H1 (cell line): ENCODE measurements at regions of chr13 and their contacts with region 1.

Region 1: DNA sequence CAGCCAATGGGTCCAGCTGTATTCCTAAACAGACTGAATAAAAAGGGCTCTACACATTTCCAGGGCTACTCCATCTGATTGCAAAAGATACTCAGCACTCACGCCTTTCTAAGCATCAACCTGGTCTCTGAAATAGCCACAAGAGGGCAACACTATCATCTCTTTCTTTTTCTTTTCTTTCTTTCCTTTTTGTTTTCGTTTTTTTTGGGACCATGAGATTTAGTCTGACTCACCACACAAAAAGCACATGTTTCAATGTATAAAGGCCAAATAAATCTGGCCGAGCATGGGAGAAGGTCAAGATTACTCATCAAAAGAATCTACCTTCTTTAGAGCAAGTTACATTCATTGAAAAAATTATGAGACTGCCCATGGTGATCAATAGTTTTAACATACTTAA is 805.6 kb upstream of the ARGLU1 start:
- DNase-seq: no peak
- H3K4me3 ChIP-seq: no peak overlapping the region
- H3K27ac ChIP-seq: no peak overlapping the region
- H3K4me1 ChIP-seq: peaks cover 0 to 1% (median 0%) of the 10 kb centered on the region in 4 experiments; a peak in 1 of 7 replicates
- H3K27me3 ChIP-seq: no peaks in the 10 kb centered on the region
- CTCF ChIP-seq: peak in 2 of 3 experiments; percentile 57 to 70; a peak in 3 of 4 replicates
- EP300 ChIP-seq: no peak
- POLR2A ChIP-seq: no peak
- RAD21 ChIP-seq: peak; percentile 70 to 78

Region 2: GRCh38 chr13:107387525-107387924 is 14.0 kb after region 1 on chr13:
- CTCF ChIA-PET with region 1: interaction called, 11 read pairs
- POLR2A ChIA-PET with region 1: interaction called, 4 read pairs
- DNase-seq: no peak
- H3K4me3 ChIP-seq: no peak overlapping the region
- H3K27ac ChIP-seq: no peak overlapping the region
- H3K4me1 ChIP-seq: peaks cover 0 to 7% (median 2%) of the 10 kb centered on the region in 4 experiments; a peak in 3 of 7 replicates
- H3K27me3 ChIP-seq: no peaks in the 10 kb centered on the region
- CTCF ChIP-seq: no peak
- EP300 ChIP-seq: no peak
- POLR2A ChIP-seq: no peak
- RAD21 ChIP-seq: no peak

Region 3: GRCh38 chr13:107650081-107650701 is 276.6 kb after region 1 on chr13:
- CTCF ChIA-PET with region 1: interaction called, 42 read pairs
- POLR2A ChIA-PET with region 1: no interaction called
- DNase-seq: peak; percentile 47 to 85
- H3K4me3 ChIP-seq: no peak overlapping the region
- H3K27ac ChIP-seq: no peak overlapping the region
- H3K4me1 ChIP-seq: no peaks in the 10 kb centered on the region
- H3K27me3 ChIP-seq: no peaks in the 10 kb centered on the region
- CTCF ChIP-seq: peak; percentile 88 to 100 (median 98)
- EP300 ChIP-seq: no peak
- POLR2A ChIP-seq: no peak
- RAD21 ChIP-seq: peak; percentile 90 to 92